Ovary (tissue), 10 donors: ENCODE measurements at regions of chr2 and their contacts with region 1.

Region 1: GRCh38 chr2:171811245-171811628 is 82.8 kb downstream of the SLC25A12 start:
- DNase-seq: no peak
- H3K4me3 ChIP-seq: no peak overlapping the region
- H3K27ac ChIP-seq: no peak overlapping the region
- H3K4me1 ChIP-seq: peaks cover 9% of the 10 kb centered on the region
- H3K27me3 ChIP-seq: no peaks in the 10 kb centered on the region
- CTCF ChIP-seq: peak in 2 of 3 donors; percentile 31 to 45
- EP300 ChIP-seq: no peak
- POLR2A ChIP-seq: no peak

Region 2: DNA sequence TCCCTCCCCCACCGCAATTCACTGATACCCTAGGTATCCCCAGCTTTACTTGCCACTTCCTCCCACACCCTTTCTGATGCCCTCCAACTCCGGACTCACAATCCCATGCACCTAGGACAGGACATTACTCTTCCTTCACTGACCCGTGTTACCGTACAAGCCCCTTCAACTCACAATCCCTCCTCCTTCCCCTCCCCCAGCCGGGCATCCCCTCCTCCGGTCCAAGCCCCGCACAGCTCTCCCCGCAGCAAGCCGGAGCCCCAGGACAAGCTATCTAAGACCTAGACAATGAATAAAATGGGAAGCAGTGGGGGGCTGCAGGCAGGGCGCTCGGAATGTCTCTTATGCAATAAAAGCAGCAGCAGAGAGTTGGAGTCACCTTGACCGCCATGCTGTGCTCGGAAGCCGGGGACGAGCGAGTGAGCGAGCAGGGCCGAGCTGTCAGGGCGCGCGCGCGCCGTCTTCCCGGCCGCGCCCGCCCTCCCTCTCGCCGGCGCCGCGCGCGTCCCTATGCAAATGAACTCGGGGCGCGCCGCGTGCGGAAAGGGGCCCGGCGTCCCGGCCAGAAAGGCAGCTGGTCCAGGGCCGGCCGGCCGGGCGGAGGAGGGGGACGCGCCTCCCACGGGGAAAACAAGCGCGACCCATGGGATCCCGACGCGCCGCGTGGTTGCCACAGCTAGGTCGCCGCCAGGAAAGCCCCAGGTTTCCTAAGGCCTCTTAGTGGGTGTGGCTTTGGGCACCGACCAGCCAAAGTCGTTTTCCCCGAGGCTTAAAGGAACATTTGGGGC is 82.8 kb after region 1 on chr2 and contains the start of gene SLC25A12:
- intact Hi-C with region 1: loop called in 1 of 4 experiments (anchors 10 kb)
- DNase-seq: peak; percentile 77 to 88 (median 83)
- H3K4me3 ChIP-seq: peak within 1 kb of the TSS; percentile 84
- H3K27ac ChIP-seq: peak within 1 kb of the TSS; percentile 22 to 54
- H3K4me1 ChIP-seq: peaks cover 3% of the 10 kb centered on the region
- H3K27me3 ChIP-seq: no peaks in the 10 kb centered on the region
- CTCF ChIP-seq: no peak
- EP300 ChIP-seq: no peak
- POLR2A ChIP-seq: peak; percentile 30
- total RNA-seq, gene SLC25A12: 15.6 to 34.1 (median 23.6) TPM

Region 3: GRCh38 chr2:171930385-171930784 is 119.1 kb after region 1 on chr2:
- intact Hi-C with region 1: no loop called
- DNase-seq: no peak
- H3K4me3 ChIP-seq: no peak overlapping the region
- H3K27ac ChIP-seq: no peak overlapping the region
- H3K4me1 ChIP-seq: no peaks in the 10 kb centered on the region
- H3K27me3 ChIP-seq: no peaks in the 10 kb centered on the region
- CTCF ChIP-seq: no peak
- EP300 ChIP-seq: no peak
- POLR2A ChIP-seq: no peak

Region 4: GRCh38 chr2:171972329-171972982 is 161.2 kb after region 1 on chr2:
- intact Hi-C with region 1: no loop called
- DNase-seq: no peak
- H3K4me3 ChIP-seq: no peak overlapping the region
- H3K27ac ChIP-seq: no peak overlapping the region
- H3K4me1 ChIP-seq: no peaks in the 10 kb centered on the region
- H3K27me3 ChIP-seq: no peaks in the 10 kb centered on the region
- CTCF ChIP-seq: no peak
- EP300 ChIP-seq: no peak
- POLR2A ChIP-seq: no peak

Region 5: GRCh38 chr2:172102391-172103278 is 291.4 kb after region 1 on chr2 and contains the start of gene DLX2:
- intact Hi-C with region 1: loop called in 2 of 4 experiments (anchors 2 to 5 kb)
- DNase-seq: peak; percentile 62 to 83 (median 68)
- H3K4me3 ChIP-seq: peak within 1 kb of the TSS; percentile 40
- H3K27ac ChIP-seq: no peak within 1 kb of the TSS
- H3K4me1 ChIP-seq: peaks cover 12% of the 10 kb centered on the region
- H3K27me3 ChIP-seq: peaks cover 20% of the 10 kb centered on the region
- CTCF ChIP-seq: no peak
- EP300 ChIP-seq: no peak
- POLR2A ChIP-seq: no peak
- total RNA-seq, gene DLX2: 0.12 TPM in 1 of 7 donors, not detected in the others

Region 6: GRCh38 chr2:172113617-172114016 is 302.4 kb after region 1 on chr2:
- intact Hi-C with region 1: loop called in 1 of 4 experiments (anchors 10 kb)
- DNase-seq: no peak
- H3K4me3 ChIP-seq: no peak overlapping the region
- H3K27ac ChIP-seq: no peak overlapping the region
- H3K4me1 ChIP-seq: no peaks in the 10 kb centered on the region
- H3K27me3 ChIP-seq: no peaks in the 10 kb centered on the region
- CTCF ChIP-seq: peak; percentile 24 to 60 (median 57)
- EP300 ChIP-seq: no peak
- POLR2A ChIP-seq: no peak

Region 7: GRCh38 chr2:172465417-172466334 is 654.4 kb after region 1 on chr2:
- intact Hi-C with region 1: loop called in 1 of 4 experiments (anchors 10 kb)
- DNase-seq: peak; percentile 60 to 85 (median 64)
- H3K4me3 ChIP-seq: peak overlapping the region; percentile 0
- H3K27ac ChIP-seq: no peak overlapping the region
- H3K4me1 ChIP-seq: peaks cover 2% of the 10 kb centered on the region
- H3K27me3 ChIP-seq: no peaks in the 10 kb centered on the region
- CTCF ChIP-seq: peak; percentile 74 to 81 (median 76)
- EP300 ChIP-seq: no peak
- POLR2A ChIP-seq: no peak